CD4-positive, alpha-beta memory T cell (primary cell): ENCODE measurements at regions of chr2 and their contacts with region 1.

Region 1: GRCh38 chr2:236558993-236559978 is 10.3 kb upstream of the ACKR3 start:
- DNase-seq: no peak
- H3K4me3 ChIP-seq: no peak overlapping the region
- H3K4me3 Mint-ChIP-seq: peak overlapping the region in 3 of 8 donors; percentile 25 to 57 (median 27)
- H3K27ac ChIP-seq: no peak overlapping the region
- H3K27ac Mint-ChIP-seq: peak overlapping the region in 5 of 7 donors; percentile 12 to 53 (median 28)
- H3K4me1 ChIP-seq: peaks cover 31% of the 10 kb centered on the region
- H3K4me1 Mint-ChIP-seq: peaks cover 32 to 55% (median 46%) of the 10 kb centered on the region in 4 donors
- H3K27me3 ChIP-seq: no peaks in the 10 kb centered on the region
- H3K27me3 Mint-ChIP-seq: no peaks in the 10 kb centered on the region

Region 2: GRCh38 chr2:236536727-236537398 is 22.4 kb before region 1 on chr2:
- CTCF ChIA-PET with region 1: interaction called, 7 read pairs
- POLR2A ChIA-PET with region 1: interaction called, 27 read pairs
- intact Hi-C with region 1: loop called (anchors 2 kb)
- DNase-seq: peak; percentile 56 to 66 (median 58)
- H3K4me3 ChIP-seq: peak overlapping the region; percentile 71 to 72
- H3K4me3 Mint-ChIP-seq: peak overlapping the region; percentile 97 to 100 (median 100)
- H3K27ac ChIP-seq: peak overlapping the region; percentile 69
- H3K27ac Mint-ChIP-seq: peak overlapping the region; percentile 90 to 100 (median 97)
- H3K4me1 ChIP-seq: peaks cover 45% of the 10 kb centered on the region
- H3K4me1 Mint-ChIP-seq: peaks cover 38 to 69% (median 51%) of the 10 kb centered on the region in 4 donors
- H3K27me3 ChIP-seq: no peaks in the 10 kb centered on the region
- H3K27me3 Mint-ChIP-seq: no peaks in the 10 kb centered on the region

Region 3: DNA sequence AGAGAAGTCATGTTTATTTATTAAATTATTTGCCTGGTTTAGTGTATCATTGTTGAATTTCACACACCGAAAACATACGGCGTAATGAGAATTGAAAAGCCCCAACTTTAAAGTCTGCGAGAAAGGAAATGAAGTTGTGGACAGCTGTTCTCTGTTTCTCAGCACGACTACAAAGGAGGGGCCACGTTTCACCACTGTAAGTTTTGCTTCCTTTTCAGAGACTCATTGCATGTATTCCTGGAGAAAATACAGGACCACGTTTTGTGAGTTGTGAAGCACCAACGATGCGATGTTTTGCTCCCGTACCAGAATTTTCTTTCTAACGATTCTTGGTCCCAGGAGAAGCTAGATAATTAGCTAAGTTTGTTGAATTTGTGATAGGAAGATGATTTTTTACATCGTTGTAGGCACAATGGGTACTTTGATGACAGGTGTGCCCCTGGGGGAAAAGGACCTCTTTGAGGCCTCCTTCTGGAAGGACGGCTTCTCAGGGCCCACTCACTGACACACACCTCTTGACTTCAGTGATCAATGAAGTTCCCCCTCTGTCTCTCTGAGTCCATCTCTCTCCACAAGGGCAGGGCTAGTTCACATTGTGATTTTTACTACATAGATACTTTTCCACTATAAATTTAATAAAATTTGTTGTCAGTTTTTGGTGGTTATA is 13.3 kb before region 1 on chr2:
- CTCF ChIA-PET with region 1: interaction called, 4 read pairs
- POLR2A ChIA-PET with region 1: interaction called, 17 read pairs
- intact Hi-C with region 1: no loop called
- DNase-seq: peak in 4 of 5 donors; percentile 20 to 32 (median 26)
- H3K4me3 ChIP-seq: no peak overlapping the region
- H3K4me3 Mint-ChIP-seq: peak overlapping the region; percentile 49 to 79 (median 73)
- H3K27ac ChIP-seq: peak overlapping the region; percentile 57
- H3K27ac Mint-ChIP-seq: peak overlapping the region; percentile 81 to 96 (median 86)
- H3K4me1 ChIP-seq: peaks cover 80% of the 10 kb centered on the region
- H3K4me1 Mint-ChIP-seq: peaks cover 79 to 97% (median 89%) of the 10 kb centered on the region in 4 donors
- H3K27me3 ChIP-seq: no peaks in the 10 kb centered on the region
- H3K27me3 Mint-ChIP-seq: no peaks in the 10 kb centered on the region

Region 4: GRCh38 chr2:236579746-236580315 is 20.5 kb after region 1 on chr2:
- CTCF ChIA-PET with region 1: no interaction called
- POLR2A ChIA-PET with region 1: no interaction called
- intact Hi-C with region 1: no loop called
- DNase-seq: no peak
- H3K4me3 ChIP-seq: no peak overlapping the region
- H3K4me3 Mint-ChIP-seq: no peak overlapping the region
- H3K27ac ChIP-seq: no peak overlapping the region
- H3K27ac Mint-ChIP-seq: no peak overlapping the region
- H3K4me1 ChIP-seq: no peaks in the 10 kb centered on the region
- H3K4me1 Mint-ChIP-seq: peaks cover 0 to 2% (median 0%) of the 10 kb centered on the region in 4 donors
- H3K27me3 ChIP-seq: no peaks in the 10 kb centered on the region
- H3K27me3 Mint-ChIP-seq: no peaks in the 10 kb centered on the region

Region 5: GRCh38 chr2:237524631-237525030 is 965.3 kb after region 1 on chr2:
- CTCF ChIA-PET with region 1: no interaction called
- POLR2A ChIA-PET with region 1: no interaction called
- intact Hi-C with region 1: no loop called
- DNase-seq: no peak
- H3K4me3 ChIP-seq: no peak overlapping the region
- H3K4me3 Mint-ChIP-seq: no peak overlapping the region
- H3K27ac ChIP-seq: no peak overlapping the region
- H3K27ac Mint-ChIP-seq: no peak overlapping the region
- H3K4me1 ChIP-seq: no peaks in the 10 kb centered on the region
- H3K4me1 Mint-ChIP-seq: peaks cover 0 to 3% (median 0%) of the 10 kb centered on the region in 4 donors
- H3K27me3 ChIP-seq: no peaks in the 10 kb centered on the region
- H3K27me3 Mint-ChIP-seq: no peaks in the 10 kb centered on the region